CD4-positive, alpha-beta T cell (primary cell): ENCODE measurements at regions of chr5 and their contacts with region 1.

Region 1: GRCh38 chr5:109688971-109689739 is 572 bp upstream of the MAN2A1 start:
- DNase-seq: peak; percentile 49 to 95 (median 72)
- ATAC-seq: peak; percentile 70
- H3K4me3 ChIP-seq: peak overlapping the region; percentile 92
- H3K4me3 Mint-ChIP-seq: peak overlapping the region; percentile 91
- H3K27ac ChIP-seq: peak overlapping the region; percentile 87 to 92
- H3K27ac Mint-ChIP-seq: peak overlapping the region; percentile 84
- H3K4me1 ChIP-seq: peaks cover 20% of the 10 kb centered on the region
- H3K4me1 Mint-ChIP-seq: peaks cover 35% of the 10 kb centered on the region
- H3K27me3 ChIP-seq: no peaks in the 10 kb centered on the region
- H3K27me3 Mint-ChIP-seq: no peaks in the 10 kb centered on the region
- CTCF ChIP-seq: no peak

Region 2: DNA sequence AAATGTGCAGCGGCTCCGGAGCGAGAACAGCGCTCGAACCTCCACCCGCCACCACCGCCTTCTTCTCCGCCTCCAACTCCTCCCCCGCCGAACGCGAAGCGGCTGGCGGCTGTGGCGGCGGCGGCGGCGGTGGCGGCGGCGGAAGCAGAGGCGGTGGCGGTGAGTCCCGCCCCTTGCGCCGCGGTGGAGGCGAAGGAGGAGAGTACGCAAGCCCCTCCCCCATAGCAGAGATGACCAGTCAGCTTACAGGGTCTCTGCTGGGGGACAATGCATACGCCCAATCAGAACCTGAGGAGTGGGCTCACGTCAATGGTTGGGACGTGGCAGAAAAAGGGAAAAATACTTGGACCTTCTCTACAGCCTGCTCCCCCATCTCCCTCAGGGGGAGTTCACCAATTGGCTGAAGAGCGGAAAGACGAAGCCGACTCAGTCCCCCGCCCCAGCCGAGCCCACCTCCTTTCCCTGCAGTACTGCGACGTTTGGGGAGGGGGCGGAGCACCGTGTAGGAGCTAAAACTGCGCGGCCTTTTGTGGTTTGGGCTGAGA is 279.2 kb before region 1 on chr5 and contains the start of gene PJA2:
- CTCF ChIA-PET with region 1: interaction called, 3 read pairs
- POLR2A ChIA-PET with region 1: interaction called, 47 read pairs
- intact Hi-C with region 1: loop called (anchors 1 to 5 kb)
- DNase-seq: peak; percentile 91 to 99 (median 96)
- ATAC-seq: peak; percentile 75
- H3K4me3 ChIP-seq: peak within 1 kb of the TSS; percentile 92
- H3K4me3 Mint-ChIP-seq: peak within 1 kb of the TSS; percentile 100
- H3K27ac ChIP-seq: peak within 1 kb of the TSS; percentile 98 to 99
- H3K27ac Mint-ChIP-seq: peak within 1 kb of the TSS; percentile 99
- H3K4me1 ChIP-seq: peaks cover 10% of the 10 kb centered on the region
- H3K4me1 Mint-ChIP-seq: peaks cover 52% of the 10 kb centered on the region
- H3K27me3 ChIP-seq: no peaks in the 10 kb centered on the region
- H3K27me3 Mint-ChIP-seq: no peaks in the 10 kb centered on the region
- CTCF ChIP-seq: no peak
- total RNA-seq, gene PJA2: 88.8 to 92.9 TPM

Region 3: DNA sequence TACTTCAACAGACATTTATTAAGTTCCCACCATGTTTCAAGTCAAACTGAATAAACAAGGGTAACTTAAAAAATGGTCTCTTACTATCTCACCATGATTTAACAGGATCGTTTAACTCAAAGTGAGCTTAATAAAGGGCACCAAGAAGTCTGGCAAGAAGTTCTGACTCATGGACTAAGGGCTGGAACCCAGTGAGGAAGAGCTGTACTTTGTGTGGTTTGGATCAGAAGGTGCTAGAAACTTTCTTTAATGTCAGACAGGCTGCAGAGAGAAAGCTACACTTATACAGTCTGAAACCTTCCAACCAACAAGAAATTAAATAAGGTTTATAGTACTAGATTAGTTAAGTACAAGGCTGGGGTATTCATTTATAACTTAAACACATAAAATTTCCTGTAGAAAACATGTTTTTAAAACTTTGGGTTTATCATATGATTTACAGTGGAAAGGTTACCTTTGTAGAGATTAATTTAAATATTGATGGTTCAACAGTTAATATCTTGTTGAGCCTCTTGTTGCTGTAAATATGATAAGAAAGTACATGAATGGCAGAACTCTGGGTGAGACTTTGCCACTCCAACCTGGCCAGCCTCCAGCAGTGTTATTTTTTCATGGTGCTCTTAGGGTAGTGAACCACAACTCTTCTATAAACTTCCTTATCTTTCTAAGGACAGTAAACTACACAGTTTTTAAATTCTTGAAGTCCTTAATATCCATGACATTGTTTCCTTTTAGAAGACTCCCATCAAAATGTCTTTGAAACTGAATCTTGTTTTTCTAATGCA is 163.4 kb after region 1 on chr5:
- CTCF ChIA-PET with region 1: no interaction called
- POLR2A ChIA-PET with region 1: interaction called, 21 read pairs
- intact Hi-C with region 1: loop called in 1 of 2 experiments (anchors 5 kb)
- DNase-seq: peak in 2 of 14 experiments; percentile 27 to 38
- ATAC-seq: no peak
- H3K4me3 ChIP-seq: no peak overlapping the region
- H3K4me3 Mint-ChIP-seq: peak overlapping the region; percentile 39
- H3K27ac ChIP-seq: no peak overlapping the region
- H3K27ac Mint-ChIP-seq: peak overlapping the region; percentile 73
- H3K4me1 ChIP-seq: peaks cover 40% of the 10 kb centered on the region
- H3K4me1 Mint-ChIP-seq: peaks cover 82% of the 10 kb centered on the region
- H3K27me3 ChIP-seq: no peaks in the 10 kb centered on the region
- H3K27me3 Mint-ChIP-seq: no peaks in the 10 kb centered on the region
- CTCF ChIP-seq: no peak

Region 4: DNA sequence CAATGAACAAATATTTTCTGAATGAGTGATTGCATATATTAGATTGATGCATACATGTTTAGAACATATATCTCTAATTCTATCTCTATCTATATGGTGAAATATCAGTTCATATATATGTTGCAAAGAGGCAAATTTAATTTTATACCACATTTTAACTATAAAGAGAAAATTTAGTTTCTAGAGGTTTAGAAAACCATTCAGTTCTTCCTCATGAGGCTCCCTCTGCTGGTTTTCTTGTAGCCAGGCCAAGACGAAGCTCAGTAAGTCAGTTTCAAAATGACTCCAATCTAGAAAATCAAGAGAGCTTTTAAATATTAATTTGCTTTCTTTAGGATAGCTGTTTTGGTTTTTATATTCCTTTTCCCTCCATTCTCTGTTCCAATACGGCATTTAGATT is 725.2 kb after region 1 on chr5:
- CTCF ChIA-PET with region 1: no interaction called
- POLR2A ChIA-PET with region 1: interaction called, 4 read pairs
- intact Hi-C with region 1: loop called (anchors 5 to 10 kb)
- DNase-seq: peak in 4 of 14 experiments; percentile 2 to 20 (median 18)
- ATAC-seq: no peak
- H3K4me3 ChIP-seq: no peak overlapping the region
- H3K4me3 Mint-ChIP-seq: no peak overlapping the region
- H3K27ac ChIP-seq: no peak overlapping the region
- H3K27ac Mint-ChIP-seq: no peak overlapping the region
- H3K4me1 ChIP-seq: no peaks in the 10 kb centered on the region
- H3K4me1 Mint-ChIP-seq: no peaks in the 10 kb centered on the region
- H3K27me3 ChIP-seq: no peaks in the 10 kb centered on the region
- H3K27me3 Mint-ChIP-seq: no peaks in the 10 kb centered on the region
- CTCF ChIP-seq: no peak

Region 5: DNA sequence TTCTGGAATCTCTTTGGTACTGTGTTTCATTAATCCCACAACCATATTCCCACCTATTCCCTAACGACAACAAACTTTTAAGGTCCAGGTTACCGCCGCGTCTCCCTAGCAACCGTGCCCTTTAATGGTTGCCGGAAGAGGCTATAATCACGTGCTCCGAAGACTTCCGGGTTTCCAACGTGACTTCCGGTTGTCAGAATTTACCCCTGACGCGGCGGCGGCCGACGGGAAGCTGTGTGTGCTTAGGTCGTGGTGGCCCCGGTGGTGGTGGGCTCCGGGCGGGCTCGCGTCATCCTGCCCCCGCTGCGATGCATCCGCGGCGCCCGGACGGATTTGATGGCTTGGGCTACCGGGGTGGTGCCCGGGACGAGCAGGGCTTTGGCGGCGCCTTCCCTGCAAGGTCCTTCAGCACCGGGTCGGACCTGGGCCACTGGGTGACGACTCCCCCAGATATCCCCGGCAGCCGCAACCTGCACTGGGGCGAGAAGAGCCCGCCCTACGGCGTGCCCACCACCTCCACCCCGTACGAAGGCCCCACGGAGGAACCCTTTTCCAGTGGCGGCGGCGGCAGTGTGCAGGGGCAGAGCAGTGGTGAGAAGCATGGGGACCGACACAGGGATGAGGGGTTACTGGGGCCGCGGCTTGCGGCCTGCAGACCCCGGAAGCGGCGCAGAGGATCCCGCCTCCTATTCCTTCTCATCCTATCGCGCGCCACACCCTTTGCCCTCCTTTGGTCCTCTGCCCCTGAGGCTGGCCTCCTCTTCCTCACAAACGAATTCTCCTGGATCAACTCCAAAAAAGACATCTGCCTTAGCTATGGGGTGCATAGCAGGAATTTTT is 1049.9 kb after region 1 on chr5 and contains the start of gene SLC25A46:
- CTCF ChIA-PET with region 1: no interaction called
- POLR2A ChIA-PET with region 1: interaction called, 8 read pairs
- intact Hi-C with region 1: loop called in 1 of 2 experiments (anchors 5 kb)
- DNase-seq: peak; percentile 77 to 95 (median 82)
- ATAC-seq: peak; percentile 78
- H3K4me3 ChIP-seq: peak within 1 kb of the TSS; percentile 92
- H3K4me3 Mint-ChIP-seq: peak within 1 kb of the TSS; percentile 96
- H3K27ac ChIP-seq: peak within 1 kb of the TSS; percentile 91 to 92
- H3K27ac Mint-ChIP-seq: peak within 1 kb of the TSS; percentile 94
- H3K4me1 ChIP-seq: peaks cover 11% of the 10 kb centered on the region
- H3K4me1 Mint-ChIP-seq: peaks cover 40% of the 10 kb centered on the region
- H3K27me3 ChIP-seq: no peaks in the 10 kb centered on the region
- H3K27me3 Mint-ChIP-seq: peaks cover 13% of the 10 kb centered on the region
- CTCF ChIP-seq: no peak
- total RNA-seq, gene SLC25A46: 14.0 to 16.1 TPM